Mammary epithelial cell (primary cell): ENCODE measurements at regions of chr14 and their contacts with region 1.

Region 1: GRCh38 chr14:76956316-76957090 is 72.0 kb downstream of the IRF2BPL start:
- DNase-seq: peak; percentile 93
- H3K4me3 ChIP-seq: peak overlapping the region in 1 of 3 experiments; percentile 25
- H3K27ac ChIP-seq: peak overlapping the region; percentile 74
- H3K4me1 ChIP-seq: peaks cover 72% of the 10 kb centered on the region
- H3K27me3 ChIP-seq: no peaks in the 10 kb centered on the region
- CTCF ChIP-seq: peak in 1 of 2 donors; percentile 14

Region 2: DNA sequence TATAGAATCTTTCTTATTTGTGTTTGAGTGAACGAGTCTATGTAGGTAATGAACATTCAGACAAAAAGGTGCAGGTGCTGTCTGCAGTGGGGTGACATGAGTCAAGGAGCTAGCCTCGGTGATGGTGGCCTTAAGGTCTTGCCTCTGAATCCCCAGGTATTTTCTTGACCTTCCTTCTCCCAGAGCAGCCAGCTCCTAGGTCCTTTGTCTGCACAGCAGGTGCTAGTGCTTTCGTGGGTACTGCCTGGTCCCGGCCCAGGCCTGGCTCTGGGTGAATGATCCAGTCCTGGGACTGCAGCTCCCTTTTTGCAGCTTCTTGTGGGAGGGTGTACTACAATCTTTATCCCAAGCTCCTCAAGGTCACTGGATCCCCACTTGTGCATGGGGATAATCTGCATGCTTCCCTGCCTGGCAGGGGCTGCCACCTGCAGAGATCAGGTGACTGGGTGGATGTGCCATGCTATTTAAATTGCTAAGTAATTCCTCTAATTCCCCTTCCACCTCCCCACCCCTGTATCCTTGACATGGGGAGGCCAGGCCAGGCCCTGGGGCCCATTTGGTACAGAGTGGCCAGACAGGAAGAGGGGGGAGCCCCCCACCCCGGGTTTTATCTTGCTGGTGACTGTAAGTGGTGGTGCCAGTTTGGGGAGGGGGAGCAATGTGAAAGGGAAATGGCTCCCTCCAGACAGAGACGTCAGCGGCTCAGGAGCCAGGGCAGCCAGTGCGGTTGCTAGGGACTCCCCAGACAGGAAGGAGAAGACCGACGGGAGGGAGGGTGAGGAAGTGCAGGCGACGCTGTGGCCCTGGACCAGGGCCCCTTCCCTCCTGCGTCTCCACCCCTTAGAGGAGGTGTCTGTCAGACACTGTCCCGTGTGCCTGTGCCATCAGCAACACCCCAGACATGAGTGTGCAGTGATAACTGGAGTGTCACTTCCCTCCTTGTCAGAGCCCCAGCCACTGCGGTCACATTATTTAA is 188.5 kb before region 1 on chr14:
- CTCF ChIA-PET with region 1: no interaction called
- dilution Hi-C with region 1: no loop called
- in situ Hi-C with region 1: no loop called
- intact Hi-C with region 1: no loop called
- DNase-seq: no peak
- H3K4me3 ChIP-seq: no peak overlapping the region
- H3K27ac ChIP-seq: no peak overlapping the region
- H3K4me1 ChIP-seq: peaks cover 3% of the 10 kb centered on the region
- H3K27me3 ChIP-seq: peaks cover 4% of the 10 kb centered on the region
- CTCF ChIP-seq: no peak

Region 3: DNA sequence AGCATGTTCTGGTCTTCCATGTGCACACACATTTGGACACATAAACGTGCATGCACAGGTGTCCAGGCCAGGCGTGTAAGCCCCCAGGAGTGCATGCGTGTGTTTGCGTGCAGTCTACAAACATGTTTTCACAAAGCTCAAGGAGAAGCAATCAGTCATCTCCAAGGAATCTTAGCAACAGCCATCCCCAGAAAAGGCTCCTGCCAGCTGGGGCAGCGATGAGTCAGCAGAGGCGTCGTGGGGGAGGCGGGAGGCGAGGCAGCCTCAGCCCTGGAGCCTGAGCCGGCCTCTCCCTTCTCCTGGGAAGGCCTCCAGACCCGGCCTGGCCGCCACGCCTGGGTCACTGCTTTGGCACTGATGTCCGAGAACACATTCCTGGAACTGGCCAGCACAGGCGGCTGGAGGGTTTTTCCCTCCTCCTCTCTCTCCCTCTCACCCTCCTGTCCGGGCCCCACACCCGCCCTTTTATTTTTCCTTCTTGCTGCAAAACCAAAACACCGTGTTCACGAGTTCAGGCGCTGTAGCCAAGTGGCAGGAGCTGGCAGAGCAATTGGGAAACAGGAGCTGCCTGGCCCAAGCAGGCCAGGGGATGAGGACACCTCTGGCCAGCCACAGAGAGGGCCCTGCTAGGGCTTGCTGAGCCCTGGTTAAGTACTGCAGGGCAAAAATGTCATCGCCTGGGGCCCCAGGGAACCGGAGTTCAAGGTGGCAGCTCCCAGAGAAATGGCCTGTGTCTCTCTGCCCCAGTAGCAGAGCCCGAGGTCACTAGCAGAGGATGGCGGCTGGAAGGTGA is 37.6 kb before region 1 on chr14:
- CTCF ChIA-PET with region 1: interaction called, 3 read pairs
- dilution Hi-C with region 1: no loop called
- in situ Hi-C with region 1: no loop called
- intact Hi-C with region 1: loop called (anchors 1 kb)
- DNase-seq: peak; percentile 96
- H3K4me3 ChIP-seq: no peak overlapping the region
- H3K27ac ChIP-seq: peak overlapping the region; percentile 88
- H3K4me1 ChIP-seq: peaks cover 44% of the 10 kb centered on the region
- H3K27me3 ChIP-seq: no peaks in the 10 kb centered on the region
- CTCF ChIP-seq: peak in 1 of 2 donors; percentile 28

Region 4: GRCh38 chr14:76937181-76938091 is 19.1 kb before region 1 on chr14:
- CTCF ChIA-PET with region 1: no interaction called
- dilution Hi-C with region 1: no loop called
- in situ Hi-C with region 1: no loop called
- intact Hi-C with region 1: loop called (anchors 1 kb)
- DNase-seq: peak; percentile 54
- H3K4me3 ChIP-seq: no peak overlapping the region
- H3K27ac ChIP-seq: peak overlapping the region; percentile 69
- H3K4me1 ChIP-seq: peaks cover 30% of the 10 kb centered on the region
- H3K27me3 ChIP-seq: no peaks in the 10 kb centered on the region
- CTCF ChIP-seq: no peak

Region 5: DNA sequence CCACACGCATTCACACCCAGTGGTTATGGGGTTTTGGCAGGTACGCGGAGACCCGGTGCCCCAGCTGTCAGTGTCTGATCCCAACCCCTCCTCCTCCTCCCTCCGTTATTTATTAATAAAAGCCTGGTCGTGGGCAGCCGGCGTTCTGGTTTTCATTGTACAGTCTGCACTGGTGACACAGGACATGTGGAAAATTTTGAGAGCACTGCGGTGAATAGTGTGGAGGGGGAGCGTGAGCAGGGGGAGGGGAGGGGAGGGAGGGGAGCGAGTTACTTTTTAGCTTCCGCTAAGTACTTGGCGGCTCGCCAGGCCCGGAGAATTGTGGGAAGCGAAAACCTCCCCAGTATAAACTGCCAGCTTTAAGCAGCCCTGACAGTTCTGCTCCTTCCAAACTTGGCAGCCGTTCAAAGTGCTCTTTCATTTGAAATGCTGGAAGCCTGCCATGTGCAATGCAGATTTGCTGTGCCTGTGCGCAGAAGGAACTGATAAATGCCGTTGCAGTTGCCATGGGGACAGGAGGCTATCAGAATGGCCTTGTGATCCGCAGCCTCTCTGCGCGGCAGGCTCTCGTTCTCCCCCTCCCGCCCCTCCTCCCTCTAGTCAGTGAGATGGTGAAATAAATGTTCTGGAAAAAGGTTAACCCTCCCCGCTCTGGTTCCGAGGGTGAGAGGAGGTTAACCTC is 83.7 kb after region 1 on chr14:
- CTCF ChIA-PET with region 1: no interaction called
- dilution Hi-C with region 1: loop called (anchors 10 kb)
- in situ Hi-C with region 1: no loop called
- intact Hi-C with region 1: loop called (anchors 2 kb)
- DNase-seq: peak; percentile 91
- H3K4me3 ChIP-seq: peak overlapping the region; percentile 10 to 25 (median 23)
- H3K27ac ChIP-seq: peak overlapping the region; percentile 97
- H3K4me1 ChIP-seq: peaks cover 73% of the 10 kb centered on the region
- H3K27me3 ChIP-seq: no peaks in the 10 kb centered on the region
- CTCF ChIP-seq: no peak